ENCODE measurements at regions of chr7 and their contacts with region 1.

Region 1: GRCh38 chr7:123871998-123872867 is 27.3 kb downstream of the HYAL4 start:
- DNase-seq: peak; percentile 31 to 73
- ATAC-seq: peak; percentile 97 to 99
- H3K4me3 ChIP-seq: no peak overlapping the region
- H3K27ac ChIP-seq: no peak overlapping the region
- H3K4me1 ChIP-seq: no peaks in the 10 kb centered on the region
- CTCF ChIP-seq: peak; percentile 86
- EP300 ChIP-seq: no peak
- POLR2A ChIP-seq: no peak
- RAD21 ChIP-seq: peak; percentile 88 to 90

Region 2: GRCh38 chr7:123480107-123480506 is 392.1 kb before region 1 on chr7:
- CTCF ChIA-PET with region 1: no interaction called
- POLR2A ChIA-PET with region 1: no interaction called
- DNase-seq: no peak
- ATAC-seq: 0 out of 6 replicates have a peak, but pooled peaks of 1 of the 2 experiments have one; percentile 24
- H3K4me3 ChIP-seq: no peak overlapping the region
- H3K27ac ChIP-seq: no peak overlapping the region
- H3K4me1 ChIP-seq: no peaks in the 10 kb centered on the region
- CTCF ChIP-seq: no peak
- EP300 ChIP-seq: no peak
- POLR2A ChIP-seq: no peak
- RAD21 ChIP-seq: no peak

Region 3: DNA sequence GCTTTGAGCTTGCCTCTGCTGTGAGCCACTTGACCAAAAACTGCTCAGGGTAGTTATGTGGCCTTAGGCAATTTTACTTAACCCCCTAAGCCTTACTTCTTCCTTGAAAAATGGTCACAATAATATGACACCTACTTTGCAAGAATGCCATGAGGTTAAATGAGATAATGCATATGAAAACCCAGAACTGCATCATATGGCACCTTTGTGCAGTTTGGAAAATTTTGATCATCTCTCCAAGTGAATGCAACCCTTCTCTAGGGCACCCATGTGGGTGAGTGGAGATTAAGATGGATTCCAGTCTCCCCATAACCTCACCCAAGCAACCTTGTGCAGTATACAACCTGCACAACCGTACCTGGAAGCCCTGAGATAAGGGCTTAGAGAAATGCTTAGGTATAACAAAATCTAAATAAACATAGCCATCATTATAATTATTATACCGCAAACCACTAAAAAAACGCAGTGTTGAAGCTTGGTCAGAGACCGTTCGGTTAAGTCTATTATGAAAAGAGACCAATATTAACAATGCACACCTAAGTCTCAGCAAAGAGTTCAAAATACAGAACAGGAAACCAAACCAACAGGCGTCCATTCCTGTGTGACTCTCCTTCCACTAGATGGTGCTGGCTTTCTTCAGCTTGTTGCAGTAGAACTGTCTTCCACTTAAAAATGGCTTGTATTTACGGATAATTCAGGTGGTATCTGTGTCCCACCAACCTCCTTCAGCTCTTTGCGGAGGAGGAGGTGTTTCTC is 291.6 kb before region 1 on chr7:
- CTCF ChIA-PET with region 1: interaction called, 29 read pairs
- POLR2A ChIA-PET with region 1: no interaction called
- DNase-seq: peak in 1 of 2 experiments; percentile 53
- ATAC-seq: peak; percentile 95 to 96
- H3K4me3 ChIP-seq: no peak overlapping the region
- H3K27ac ChIP-seq: no peak overlapping the region
- H3K4me1 ChIP-seq: no peaks in the 10 kb centered on the region
- CTCF ChIP-seq: peak; percentile 68
- EP300 ChIP-seq: no peak
- POLR2A ChIP-seq: no peak
- RAD21 ChIP-seq: peak; percentile 63 to 68

Region 4: GRCh38 chr7:123643495-123644441 is 228.5 kb before region 1 on chr7:
- CTCF ChIA-PET with region 1: interaction called, 11 read pairs
- POLR2A ChIA-PET with region 1: no interaction called
- DNase-seq: peak in 1 of 2 experiments; percentile 13
- ATAC-seq: peak in 1 of 2 experiments; percentile 36; a peak in 3 of 6 replicates
- H3K4me3 ChIP-seq: no peak overlapping the region
- H3K27ac ChIP-seq: no peak overlapping the region
- H3K4me1 ChIP-seq: no peaks in the 10 kb centered on the region
- CTCF ChIP-seq: no peak
- EP300 ChIP-seq: no peak
- POLR2A ChIP-seq: no peak
- RAD21 ChIP-seq: no peak

Region 5: GRCh38 chr7:123682690-123683089 is 189.5 kb before region 1 on chr7:
- CTCF ChIA-PET with region 1: interaction called, 23 read pairs
- POLR2A ChIA-PET with region 1: interaction called, 3 read pairs
- DNase-seq: peak; percentile 19 to 62
- ATAC-seq: peak; percentile 66 to 88
- H3K4me3 ChIP-seq: no peak overlapping the region
- H3K27ac ChIP-seq: no peak overlapping the region
- H3K4me1 ChIP-seq: no peaks in the 10 kb centered on the region
- CTCF ChIP-seq: peak; percentile 80
- EP300 ChIP-seq: no peak
- POLR2A ChIP-seq: no peak
- RAD21 ChIP-seq: peak; percentile 73 to 83

Region 6: DNA sequence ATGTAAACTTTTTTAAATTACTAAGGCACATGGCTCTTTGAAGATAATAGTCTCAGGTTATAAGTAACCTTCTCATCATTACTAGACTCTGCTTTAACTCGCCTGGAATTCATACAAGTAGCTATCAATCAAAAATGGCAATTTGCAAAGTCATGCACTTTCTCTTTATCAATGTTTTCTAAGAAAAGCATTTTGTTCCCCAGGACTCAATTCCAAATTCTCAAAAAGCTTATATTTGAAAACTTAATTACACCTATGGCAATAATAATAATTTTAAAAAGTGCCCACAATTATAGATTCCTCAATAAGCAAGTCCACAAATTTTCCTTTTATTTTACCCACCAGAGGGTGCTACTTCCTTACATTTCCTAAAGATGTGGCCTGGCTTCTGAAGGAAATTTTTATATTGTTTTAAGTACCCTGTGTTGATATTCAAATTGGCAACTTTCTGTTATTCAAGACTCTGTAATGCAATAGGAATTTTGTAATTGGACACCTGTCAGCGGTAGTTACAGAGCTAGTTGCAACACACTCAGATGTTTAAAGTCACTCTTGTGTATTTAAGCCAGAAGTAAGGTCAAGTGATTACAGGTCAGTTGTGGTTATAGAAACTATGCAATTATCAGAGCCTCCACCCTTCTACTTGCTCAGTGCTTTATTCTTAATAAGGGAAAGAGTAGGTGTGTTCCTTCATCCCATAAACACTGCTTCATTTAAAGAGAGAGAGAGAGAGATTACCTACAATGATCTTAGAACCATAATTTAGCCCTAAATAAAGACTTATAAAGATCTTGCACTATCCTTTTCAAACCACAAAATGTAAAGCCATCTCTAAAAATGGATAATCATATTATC is 74.3 kb before region 1 on chr7:
- CTCF ChIA-PET with region 1: interaction called, 75 read pairs
- POLR2A ChIA-PET with region 1: no interaction called
- DNase-seq: peak; percentile 7 to 54
- ATAC-seq: peak; percentile 66 to 86
- H3K4me3 ChIP-seq: no peak overlapping the region
- H3K27ac ChIP-seq: no peak overlapping the region
- H3K4me1 ChIP-seq: peaks cover 4% of the 10 kb centered on the region; the same call in 1 of the 3 replicates
- CTCF ChIP-seq: peak; percentile 87
- EP300 ChIP-seq: no peak
- POLR2A ChIP-seq: no peak
- RAD21 ChIP-seq: peak; percentile 81 to 89

Region 7: DNA sequence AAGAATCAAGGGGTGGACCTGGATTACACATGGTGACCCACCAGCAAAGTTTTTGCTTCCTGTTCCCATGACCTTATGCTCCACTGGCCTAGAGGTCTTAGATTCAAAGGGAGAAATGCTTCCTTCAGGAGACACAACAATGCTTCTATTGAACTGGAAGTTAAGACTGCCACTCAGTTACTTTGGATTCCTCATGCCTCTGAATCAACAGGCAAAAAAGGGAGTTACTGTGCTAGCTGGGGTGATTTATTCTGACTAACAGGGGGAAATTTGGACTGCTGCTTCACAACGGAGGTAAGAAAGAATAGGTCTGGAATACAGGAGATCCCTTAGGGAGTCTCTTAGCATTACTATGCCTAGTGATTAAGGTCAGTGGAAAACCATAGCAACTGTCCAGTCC is 150.3 kb after region 1 on chr7:
- CTCF ChIA-PET with region 1: no interaction called
- POLR2A ChIA-PET with region 1: no interaction called
- DNase-seq: no peak
- ATAC-seq: no peak
- H3K4me3 ChIP-seq: no peak overlapping the region
- H3K27ac ChIP-seq: no peak overlapping the region
- H3K4me1 ChIP-seq: no peaks in the 10 kb centered on the region
- CTCF ChIP-seq: no peak
- EP300 ChIP-seq: no peak
- POLR2A ChIP-seq: no peak
- RAD21 ChIP-seq: no peak